Endothelial cell of umbilical vein (primary cell): ENCODE measurements at regions of chr3 and their contacts with region 1.

Region 1: DNA sequence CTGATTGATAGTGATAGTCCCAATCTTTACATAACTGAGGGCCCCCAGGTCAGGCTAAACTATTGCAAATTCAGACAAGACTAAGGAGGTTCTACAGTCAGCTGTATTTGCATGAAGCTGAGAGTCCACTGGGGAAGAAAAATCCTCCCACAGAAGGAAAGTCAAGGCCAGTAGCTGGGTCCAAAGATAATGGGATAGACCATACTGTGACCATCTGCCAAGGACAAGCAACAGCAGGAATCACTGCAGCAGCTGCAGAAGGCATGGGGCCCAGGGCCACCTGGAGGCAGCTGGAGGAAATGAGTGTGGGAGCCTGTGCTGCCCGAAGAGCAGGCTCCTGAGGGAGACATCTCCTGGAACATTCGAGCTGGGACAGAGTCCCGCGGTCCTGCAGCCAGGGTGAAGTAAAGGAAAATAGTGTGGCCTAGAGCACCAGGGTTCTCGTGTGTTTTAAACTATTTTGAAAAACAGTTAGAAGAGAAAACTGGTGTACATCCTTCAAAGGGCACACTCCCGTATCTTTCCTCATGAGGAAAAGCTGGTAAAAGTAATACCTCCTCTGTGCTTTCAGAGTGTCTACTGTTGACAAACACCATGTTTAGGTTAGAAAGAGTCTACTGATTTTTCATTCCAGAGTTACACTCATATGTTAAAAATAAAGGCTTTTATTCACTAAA is 13.2 kb upstream of the TMEM212 start:
- DNase-seq: peak; percentile 96
- H3K4me3 ChIP-seq: no peak overlapping the region
- H3K27ac ChIP-seq: peak overlapping the region; percentile 74
- H3K4me1 ChIP-seq: peaks cover 51% of the 10 kb centered on the region
- H3K27me3 ChIP-seq: no peaks in the 10 kb centered on the region
- CTCF ChIP-seq: peak; percentile 74 to 81
- POLR2A ChIP-seq: no peak

Region 2: DNA sequence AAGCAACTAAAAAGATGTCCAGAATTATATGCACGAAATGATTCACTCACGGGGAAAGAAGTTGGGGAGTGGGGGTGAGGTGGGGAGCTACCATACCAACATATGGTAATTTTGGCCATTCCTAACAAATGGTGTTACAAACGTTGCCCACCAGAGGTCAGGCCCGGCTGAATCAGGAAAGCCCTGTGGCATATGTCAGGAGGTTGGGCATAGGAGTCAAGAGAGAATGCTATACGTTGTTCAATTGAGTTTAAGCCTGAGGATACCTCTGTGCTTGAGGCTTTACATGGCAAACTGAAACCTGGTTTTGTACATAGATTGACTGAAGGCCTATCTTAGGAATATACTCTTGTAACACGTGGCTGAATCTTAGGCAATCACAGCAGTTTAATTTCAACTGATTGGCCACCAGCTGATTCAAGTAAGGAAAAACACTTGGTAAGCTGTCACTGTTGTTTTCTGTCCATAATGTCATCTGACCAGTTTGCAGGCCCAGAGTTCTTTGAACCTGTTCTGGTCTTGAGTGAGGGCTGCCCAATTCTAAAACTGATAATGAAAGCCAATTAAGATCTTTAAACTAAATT is 780.0 kb before region 1 on chr3:
- CTCF ChIA-PET with region 1: interaction called, 3 read pairs
- POLR2A ChIA-PET with region 1: no interaction called
- dilution Hi-C with region 1: no loop called
- intact Hi-C with region 1: loop called (anchors 2 kb)
- DNase-seq: peak; percentile 67
- H3K4me3 ChIP-seq: no peak overlapping the region
- H3K27ac ChIP-seq: no peak overlapping the region
- H3K4me1 ChIP-seq: no peaks in the 10 kb centered on the region
- H3K27me3 ChIP-seq: no peaks in the 10 kb centered on the region
- CTCF ChIP-seq: peak; percentile 58 to 63
- POLR2A ChIP-seq: no peak

Region 3: DNA sequence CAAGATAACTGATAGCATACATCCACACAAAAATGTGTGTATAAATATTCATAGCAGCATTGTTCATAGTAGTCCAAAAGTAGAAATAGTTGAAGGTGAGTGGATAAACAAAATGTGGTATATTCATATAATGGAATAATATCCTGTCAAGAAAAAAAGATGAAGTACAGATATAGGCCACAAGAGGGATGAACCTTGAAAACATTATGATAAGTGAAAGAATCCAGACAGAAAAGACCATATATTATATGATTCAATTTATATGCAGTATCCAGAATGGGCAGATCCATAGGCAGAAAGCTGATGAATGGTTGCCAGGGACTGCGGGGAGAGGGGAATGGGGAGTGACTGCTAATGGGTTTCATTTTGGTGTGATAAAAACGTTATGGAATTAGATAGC is 315.5 kb before region 1 on chr3:
- CTCF ChIA-PET with region 1: no interaction called
- POLR2A ChIA-PET with region 1: no interaction called
- dilution Hi-C with region 1: no loop called
- intact Hi-C with region 1: no loop called
- DNase-seq: no peak
- H3K4me3 ChIP-seq: no peak overlapping the region
- H3K27ac ChIP-seq: no peak overlapping the region
- H3K4me1 ChIP-seq: no peaks in the 10 kb centered on the region
- H3K27me3 ChIP-seq: peaks cover 0 to 5% of the 10 kb centered on the region in 2 experiments
- CTCF ChIP-seq: no peak
- POLR2A ChIP-seq: no peak

Region 4: GRCh38 chr3:171703756-171704401 is 126.1 kb before region 1 on chr3:
- CTCF ChIA-PET with region 1: interaction called, 17 read pairs
- POLR2A ChIA-PET with region 1: no interaction called
- dilution Hi-C with region 1: no loop called
- intact Hi-C with region 1: loop called (anchors 1 kb)
- DNase-seq: peak; percentile 45
- H3K4me3 ChIP-seq: no peak overlapping the region
- H3K27ac ChIP-seq: no peak overlapping the region
- H3K4me1 ChIP-seq: no peaks in the 10 kb centered on the region
- H3K27me3 ChIP-seq: no peaks in the 10 kb centered on the region
- CTCF ChIP-seq: peak; percentile 59 to 69
- POLR2A ChIP-seq: no peak

Region 5: GRCh38 chr3:171788546-171789351 is 41.2 kb before region 1 on chr3:
- CTCF ChIA-PET with region 1: interaction called, 25 read pairs
- POLR2A ChIA-PET with region 1: no interaction called
- dilution Hi-C with region 1: no loop called
- intact Hi-C with region 1: loop called (anchors 1 kb)
- DNase-seq: peak; percentile 92
- H3K4me3 ChIP-seq: no peak overlapping the region
- H3K27ac ChIP-seq: peak overlapping the region; percentile 99
- H3K4me1 ChIP-seq: peaks cover 75% of the 10 kb centered on the region
- H3K27me3 ChIP-seq: no peaks in the 10 kb centered on the region
- CTCF ChIP-seq: no peak
- POLR2A ChIP-seq: no peak

Region 6: GRCh38 chr3:171809821-171810628 is 20.0 kb before region 1 on chr3 and contains the start of gene PLD1:
- CTCF ChIA-PET with region 1: interaction called, 24 read pairs
- POLR2A ChIA-PET with region 1: interaction called, 6 read pairs
- dilution Hi-C with region 1: no loop called
- intact Hi-C with region 1: loop called (anchors 1 kb)
- DNase-seq: peak; percentile 79
- H3K4me3 ChIP-seq: peak within 1 kb of the TSS; percentile 35 to 71 (median 60)
- H3K27ac ChIP-seq: peak within 1 kb of the TSS; percentile 93
- H3K4me1 ChIP-seq: peaks cover 45% of the 10 kb centered on the region
- H3K27me3 ChIP-seq: no peaks in the 10 kb centered on the region
- CTCF ChIP-seq: no peak
- POLR2A ChIP-seq: peak; percentile 82
- total RNA-seq, gene PLD1: 75.6 and 108 TPM in 2 replicates